ENCODE measurements at regions of chr20 and their contacts with region 1.

Region 1: GRCh38 chr20:35954200-35954906 is at the start of gene SCAND1:
- DNase-seq: peak; percentile 95
- H3K4me3 ChIP-seq: peak within 1 kb of the TSS; percentile 75 to 95 (median 88)
- H3K27ac ChIP-seq: peak within 1 kb of the TSS; percentile 97
- H3K4me1 ChIP-seq: peaks cover 0 to 3% (median 0%) of the 10 kb centered on the region in 4 experiments; a peak in 2 of 7 replicates
- H3K27me3 ChIP-seq: no peaks in the 10 kb centered on the region
- CTCF ChIP-seq: peak; percentile 95 to 99 (median 98)
- EP300 ChIP-seq: peak in 1 of 2 experiments; percentile 73; a peak in 2 of 3 replicates
- POLR2A ChIP-seq: peak; percentile 89 to 98
- RAD21 ChIP-seq: peak; percentile 47 to 55
- total RNA-seq, gene SCAND1: 73.1 and 86.0 TPM in 2 replicates

Region 2: GRCh38 chr20:35934050-35934449 is 20.3 kb before region 1 on chr20:
- CTCF ChIA-PET with region 1: no interaction called
- POLR2A ChIA-PET with region 1: interaction called, 12 read pairs
- DNase-seq: peak in 1 of 2 experiments; percentile 29
- H3K4me3 ChIP-seq: peak overlapping the region in 1 of 4 experiments; percentile 27; a peak in 1 of 8 replicates
- H3K27ac ChIP-seq: peak overlapping the region; percentile 30
- H3K4me1 ChIP-seq: peaks cover 6 to 12% (median 10%) of the 10 kb centered on the region in 4 experiments; a peak in 5 of 7 replicates
- H3K27me3 ChIP-seq: no peaks in the 10 kb centered on the region; a peak in 1 of 7 replicates
- CTCF ChIP-seq: no peak
- EP300 ChIP-seq: no peak
- POLR2A ChIP-seq: peak in 1 of 2 experiments; percentile 25; a peak in 1 of 3 replicates
- RAD21 ChIP-seq: no peak

Region 3: GRCh38 chr20:35942243-35942642 is 12.1 kb before region 1 on chr20:
- CTCF ChIA-PET with region 1: interaction called, 26 read pairs
- POLR2A ChIA-PET with region 1: interaction called, 12 read pairs
- DNase-seq: no peak
- H3K4me3 ChIP-seq: no peak overlapping the region
- H3K27ac ChIP-seq: no peak overlapping the region
- H3K4me1 ChIP-seq: peaks cover under 1 to 8% (median 5%) of the 10 kb centered on the region in 4 experiments; a peak in 5 of 7 replicates
- H3K27me3 ChIP-seq: no peaks in the 10 kb centered on the region; a peak in 1 of 7 replicates
- CTCF ChIP-seq: no peak
- EP300 ChIP-seq: no peak
- POLR2A ChIP-seq: no peak
- RAD21 ChIP-seq: no peak

Region 4: GRCh38 chr20:35968931-35969330 is 14.6 kb after region 1 on chr20:
- CTCF ChIA-PET with region 1: interaction called, 21 read pairs
- POLR2A ChIA-PET with region 1: interaction called, 11 read pairs
- DNase-seq: no peak
- H3K4me3 ChIP-seq: no peak overlapping the region
- H3K27ac ChIP-seq: no peak overlapping the region
- H3K4me1 ChIP-seq: peaks cover 0 to 2% (median 0%) of the 10 kb centered on the region in 4 experiments; a peak in 2 of 7 replicates
- H3K27me3 ChIP-seq: no peaks in the 10 kb centered on the region; a peak in 1 of 7 replicates
- CTCF ChIP-seq: no peak
- EP300 ChIP-seq: no peak
- POLR2A ChIP-seq: no peak
- RAD21 ChIP-seq: no peak

Region 5: GRCh38 chr20:35985806-35986205 is 31.5 kb after region 1 on chr20:
- CTCF ChIA-PET with region 1: interaction called, 11 read pairs
- POLR2A ChIA-PET with region 1: interaction called, 7 read pairs
- DNase-seq: no peak
- H3K4me3 ChIP-seq: no peak overlapping the region
- H3K27ac ChIP-seq: no peak overlapping the region
- H3K4me1 ChIP-seq: no peaks in the 10 kb centered on the region; a peak in 1 of 7 replicates
- H3K27me3 ChIP-seq: no peaks in the 10 kb centered on the region; a peak in 1 of 7 replicates
- CTCF ChIP-seq: no peak
- EP300 ChIP-seq: no peak
- POLR2A ChIP-seq: no peak
- RAD21 ChIP-seq: no peak

Region 6: DNA sequence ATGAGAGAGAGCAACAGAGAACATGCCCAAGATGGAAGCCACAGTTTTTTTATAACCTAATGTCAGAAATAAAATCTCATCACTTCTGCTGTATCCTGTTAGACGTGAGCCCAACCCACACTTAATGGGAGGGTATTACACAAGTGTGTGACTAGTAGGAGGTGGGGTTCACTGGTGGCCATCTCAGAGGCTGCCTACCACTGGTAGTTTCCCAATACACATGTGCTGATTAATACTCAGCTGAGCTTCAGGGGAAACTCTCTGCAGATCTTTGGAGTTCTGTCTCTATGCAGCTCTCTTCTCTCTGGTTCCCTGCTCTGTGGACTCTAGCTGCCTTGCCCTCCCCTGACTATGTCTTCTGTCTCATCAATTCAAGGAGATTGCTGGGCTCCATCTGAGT is 49.7 kb after region 1 on chr20:
- CTCF ChIA-PET with region 1: no interaction called
- POLR2A ChIA-PET with region 1: no interaction called
- DNase-seq: no peak
- H3K4me3 ChIP-seq: no peak overlapping the region
- H3K27ac ChIP-seq: no peak overlapping the region
- H3K4me1 ChIP-seq: no peaks in the 10 kb centered on the region
- H3K27me3 ChIP-seq: no peaks in the 10 kb centered on the region
- CTCF ChIP-seq: no peak
- EP300 ChIP-seq: no peak
- POLR2A ChIP-seq: no peak
- RAD21 ChIP-seq: no peak

Region 7: GRCh38 chr20:36135821-36136220 is 181.5 kb after region 1 on chr20:
- CTCF ChIA-PET with region 1: interaction called, 23 read pairs
- POLR2A ChIA-PET with region 1: interaction called, 6 read pairs
- DNase-seq: no peak
- H3K4me3 ChIP-seq: no peak overlapping the region
- H3K27ac ChIP-seq: no peak overlapping the region
- H3K4me1 ChIP-seq: no peaks in the 10 kb centered on the region
- H3K27me3 ChIP-seq: no peaks in the 10 kb centered on the region
- CTCF ChIP-seq: no peak
- EP300 ChIP-seq: no peak
- POLR2A ChIP-seq: no peak
- RAD21 ChIP-seq: no peak

Measured in H1 (cell line).